Cardiac septum (tissue), 1 donor: ENCODE measurements at regions of chr14 and their contacts with region 1.

Region 1: GRCh38 chr14:61561657-61562276 is 133.5 kb upstream of the HIF1A start:
- DNase-seq: peak; percentile 89

Region 2: DNA sequence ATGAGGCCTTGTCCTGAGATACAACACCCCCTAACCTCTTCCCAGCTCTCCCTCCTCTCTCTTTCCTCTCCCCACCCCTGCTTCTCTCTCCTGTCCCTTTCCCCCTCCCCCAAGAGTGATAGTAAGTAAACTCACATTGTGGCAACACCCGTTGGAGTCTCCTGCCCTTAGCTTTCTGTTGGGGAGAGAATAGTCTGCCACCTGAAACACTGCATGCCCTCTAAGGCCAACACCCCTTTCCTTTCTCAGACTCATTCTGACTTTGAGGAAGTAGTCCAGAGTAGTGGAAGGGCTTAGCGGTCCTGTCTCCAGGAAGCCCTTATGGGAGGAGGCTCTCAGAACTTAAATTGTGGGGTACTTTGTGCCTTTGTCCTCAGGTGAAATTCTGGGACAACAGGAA is 145.2 kb before region 1 on chr14:
- intact Hi-C with region 1: no loop called
- DNase-seq: no peak

Region 3: GRCh38 chr14:61525293-61526011 is 36.3 kb before region 1 on chr14:
- intact Hi-C with region 1: loop called (anchors 5 kb)
- DNase-seq: peak; percentile 87